Aorta (tissue), 5 donors: ENCODE measurements at regions of chr13 and their contacts with region 1.

Region 1: DNA sequence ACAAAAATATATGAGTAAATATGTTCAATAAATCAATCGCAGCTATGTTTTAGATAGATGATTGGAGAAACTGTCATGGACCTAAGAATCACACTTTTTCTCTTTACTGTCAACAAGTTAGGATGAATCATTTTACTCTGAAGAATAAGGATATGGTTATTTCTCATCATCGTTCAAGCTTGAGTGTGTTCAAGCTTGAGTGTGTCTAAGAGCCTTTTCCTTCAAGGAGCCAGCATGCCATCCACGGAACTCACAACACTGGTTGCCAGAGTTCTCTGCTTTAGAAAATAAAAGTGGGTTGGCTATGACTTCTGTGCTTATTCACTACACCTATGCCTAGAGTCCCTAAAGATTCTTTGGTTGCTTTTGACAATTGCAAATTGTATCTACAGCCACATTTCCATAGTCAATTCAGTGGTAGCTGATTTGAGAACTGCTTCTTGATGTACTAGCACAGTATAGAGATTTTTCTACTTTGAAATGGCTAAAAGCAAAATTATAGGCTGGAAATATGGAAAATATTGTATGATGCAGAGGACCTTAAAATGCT is 58.1 kb upstream of the SCEL start:
- DNase-seq: no peak
- ATAC-seq: no peak
- H3K4me3 ChIP-seq: no peak overlapping the region
- H3K27ac ChIP-seq: no peak overlapping the region
- H3K4me1 ChIP-seq: no peaks in the 10 kb centered on the region
- H3K27me3 ChIP-seq: no peaks in the 10 kb centered on the region

Region 2: DNA sequence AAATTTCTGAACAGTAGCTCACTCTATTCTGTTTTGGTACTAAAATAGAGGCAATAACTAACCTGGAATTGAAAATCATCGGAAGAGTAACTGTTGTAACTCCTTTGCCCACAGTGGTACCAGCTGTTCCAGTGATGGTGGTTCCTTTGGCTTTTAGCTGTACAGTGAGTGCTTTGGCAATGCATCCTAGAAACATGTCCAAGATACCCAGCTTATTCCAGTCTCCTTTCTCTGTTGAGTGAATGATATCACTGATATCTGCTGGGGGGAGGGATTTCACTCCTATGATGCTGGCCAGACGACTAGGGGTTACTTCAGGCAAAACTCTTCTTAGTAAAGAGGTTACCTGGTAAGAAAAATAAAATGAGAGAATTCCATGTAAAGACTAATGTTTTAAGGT is 409.9 kb before region 1 on chr13:
- intact Hi-C with region 1: no loop called
- DNase-seq: no peak
- ATAC-seq: no peak
- H3K4me3 ChIP-seq: no peak overlapping the region
- H3K27ac ChIP-seq: no peak overlapping the region
- H3K4me1 ChIP-seq: no peaks in the 10 kb centered on the region
- H3K27me3 ChIP-seq: no peaks in the 10 kb centered on the region

Region 3: GRCh38 chr13:77274126-77274525 is 203.2 kb before region 1 on chr13:
- intact Hi-C with region 1: loop called (anchors 10 kb)
- DNase-seq: no peak
- ATAC-seq: no peak
- H3K4me3 ChIP-seq: no peak overlapping the region
- H3K27ac ChIP-seq: no peak overlapping the region
- H3K4me1 ChIP-seq: no peaks in the 10 kb centered on the region
- H3K27me3 ChIP-seq: no peaks in the 10 kb centered on the region

Region 4: GRCh38 chr13:77329133-77329910 is 148.1 kb before region 1 on chr13:
- intact Hi-C with region 1: loop called (anchors 5 kb)
- DNase-seq: peak; percentile 91 to 92
- ATAC-seq: peak; percentile 89
- H3K4me3 ChIP-seq: peak overlapping the region; percentile 35 to 76
- H3K27ac ChIP-seq: peak overlapping the region in 1 of 2 donors; percentile 58
- H3K4me1 ChIP-seq: no peaks in the 10 kb centered on the region
- H3K27me3 ChIP-seq: no peaks in the 10 kb centered on the region

Region 5: DNA sequence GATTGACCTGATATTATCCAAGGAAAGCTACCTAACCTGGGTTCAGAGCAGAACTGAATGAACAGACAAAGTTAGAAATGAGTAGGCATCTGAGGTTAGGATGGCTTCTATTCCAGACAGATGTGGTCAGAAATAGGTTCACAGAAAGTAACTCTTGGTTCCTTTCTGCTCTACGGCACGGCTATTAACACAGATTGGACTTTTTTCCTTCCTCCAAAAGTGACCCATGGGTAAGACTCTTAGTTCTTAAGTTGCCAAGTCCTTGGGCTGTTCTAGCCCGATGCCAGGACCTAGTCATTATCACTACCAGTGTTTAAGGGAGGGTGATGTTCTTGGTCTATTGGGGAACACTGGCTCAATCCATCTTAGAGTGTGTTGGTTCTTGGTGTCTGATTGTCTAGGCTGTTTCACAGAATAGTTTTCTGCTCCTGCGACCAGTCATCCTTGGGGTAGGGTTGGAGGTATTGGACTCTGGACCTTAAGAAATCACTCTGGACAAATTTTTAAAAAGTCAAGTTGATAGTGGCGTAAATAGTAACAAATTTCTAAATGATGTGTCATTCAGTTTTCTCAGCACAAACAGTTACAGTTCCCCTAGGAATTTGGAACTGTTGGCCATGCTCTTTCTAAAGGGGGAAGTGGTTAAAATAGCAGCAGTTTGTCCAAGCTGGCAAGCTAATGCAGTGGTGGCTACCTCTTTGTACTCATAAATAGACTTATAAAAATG is 90.3 kb before region 1 on chr13:
- intact Hi-C with region 1: loop called in 1 of 2 experiments (anchors 5 kb)
- DNase-seq: peak in 1 of 2 donors; percentile 68
- ATAC-seq: peak; percentile 89
- H3K4me3 ChIP-seq: no peak overlapping the region
- H3K27ac ChIP-seq: peak overlapping the region; percentile 76 to 91
- H3K4me1 ChIP-seq: peaks cover 8 to 9% of the 10 kb centered on the region in 2 donors
- H3K27me3 ChIP-seq: peaks cover 0 to 2% of the 10 kb centered on the region in 2 donors

Region 6: GRCh38 chr13:77429320-77430142 is 47.8 kb before region 1 on chr13:
- intact Hi-C with region 1: no loop called
- DNase-seq: no peak
- ATAC-seq: no peak
- H3K4me3 ChIP-seq: no peak overlapping the region
- H3K27ac ChIP-seq: no peak overlapping the region
- H3K4me1 ChIP-seq: no peaks in the 10 kb centered on the region
- H3K27me3 ChIP-seq: no peaks in the 10 kb centered on the region

Region 7: GRCh38 chr13:77521595-77522367 is 44.4 kb after region 1 on chr13:
- intact Hi-C with region 1: no loop called
- DNase-seq: no peak
- ATAC-seq: no peak
- H3K4me3 ChIP-seq: no peak overlapping the region
- H3K27ac ChIP-seq: no peak overlapping the region
- H3K4me1 ChIP-seq: no peaks in the 10 kb centered on the region
- H3K27me3 ChIP-seq: no peaks in the 10 kb centered on the region

Region 8: GRCh38 chr13:77637588-77637987 is 160.2 kb after region 1 on chr13:
- intact Hi-C with region 1: no loop called
- DNase-seq: peak in 1 of 2 donors; percentile 56
- ATAC-seq: no peak
- H3K4me3 ChIP-seq: no peak overlapping the region
- H3K27ac ChIP-seq: no peak overlapping the region
- H3K4me1 ChIP-seq: no peaks in the 10 kb centered on the region
- H3K27me3 ChIP-seq: peaks cover 0 to 2% of the 10 kb centered on the region in 2 donors